Endothelial cell of umbilical vein (primary cell): ENCODE measurements at regions of chr11 and their contacts with region 1.

Region 1: GRCh38 chr11:77820563-77821348 is at the starts of genes AAMDC and RSF1:
- DNase-seq: peak; percentile 99
- H3K4me3 ChIP-seq: peak within 1 kb of the TSS; percentile 88 to 96 (median 91)
- H3K27ac ChIP-seq: peak within 1 kb of the TSS; percentile 53
- H3K4me1 ChIP-seq: peaks cover 13% of the 10 kb centered on the region
- H3K27me3 ChIP-seq: no peaks in the 10 kb centered on the region
- CTCF ChIP-seq: peak; percentile 61 to 93
- POLR2A ChIP-seq: peak; percentile 79
- total RNA-seq, gene AAMDC: 51.0 and 57.1 TPM in 2 replicates
- total RNA-seq, gene RSF1: 55.1 and 58.6 TPM in 2 replicates

Region 2: DNA sequence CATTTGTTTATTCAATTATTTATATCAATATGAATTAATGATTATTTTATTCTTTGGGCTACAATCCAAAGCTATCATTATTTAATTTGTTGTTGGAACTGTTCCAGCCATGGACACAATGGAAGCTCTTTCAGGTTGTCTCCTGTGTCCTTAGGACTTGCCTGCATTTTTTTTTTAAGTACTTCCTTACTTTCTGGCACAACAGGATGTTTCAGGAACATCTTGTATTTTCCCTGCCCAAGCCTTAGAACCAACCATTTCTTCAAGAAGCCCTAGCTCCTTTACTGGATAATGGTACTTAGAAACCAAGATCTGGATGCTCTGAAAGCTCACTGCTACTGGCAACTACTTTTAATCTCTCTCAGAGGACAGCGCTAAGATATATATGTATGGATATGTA is 125.3 kb before region 1 on chr11:
- CTCF ChIA-PET with region 1: no interaction called
- POLR2A ChIA-PET with region 1: no interaction called
- dilution Hi-C with region 1: no loop called
- intact Hi-C with region 1: no loop called
- DNase-seq: peak; percentile 22
- H3K4me3 ChIP-seq: no peak overlapping the region
- H3K27ac ChIP-seq: no peak overlapping the region
- H3K4me1 ChIP-seq: peaks cover 7% of the 10 kb centered on the region
- H3K27me3 ChIP-seq: no peaks in the 10 kb centered on the region
- CTCF ChIP-seq: no peak
- POLR2A ChIP-seq: no peak

Region 3: DNA sequence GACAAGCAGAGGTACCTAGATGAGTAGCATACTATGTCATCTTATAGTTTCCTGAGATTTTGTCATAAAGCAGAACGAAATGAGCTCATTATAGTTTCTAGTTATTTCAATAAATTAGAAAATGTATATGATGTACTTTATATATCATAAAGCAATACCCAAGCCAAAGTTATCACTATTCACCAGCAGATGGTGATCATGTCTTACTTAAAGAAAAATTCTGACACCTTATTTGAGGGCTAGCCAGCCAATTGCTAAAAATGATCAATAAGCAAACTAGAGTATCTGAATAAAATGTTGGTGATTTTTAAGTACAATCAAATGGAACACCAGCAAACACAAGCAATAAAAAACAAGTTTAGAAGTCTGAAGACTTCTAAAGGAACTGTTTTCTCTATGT is 44.3 kb before region 1 on chr11:
- CTCF ChIA-PET with region 1: interaction called, 4 read pairs
- POLR2A ChIA-PET with region 1: no interaction called
- dilution Hi-C with region 1: no loop called
- intact Hi-C with region 1: loop called (anchors 2 kb)
- DNase-seq: peak; percentile 49
- H3K4me3 ChIP-seq: no peak overlapping the region
- H3K27ac ChIP-seq: no peak overlapping the region
- H3K4me1 ChIP-seq: peaks cover 6% of the 10 kb centered on the region
- H3K27me3 ChIP-seq: no peaks in the 10 kb centered on the region
- CTCF ChIP-seq: peak in 1 of 2 donors; percentile 12
- POLR2A ChIP-seq: no peak

Region 4: DNA sequence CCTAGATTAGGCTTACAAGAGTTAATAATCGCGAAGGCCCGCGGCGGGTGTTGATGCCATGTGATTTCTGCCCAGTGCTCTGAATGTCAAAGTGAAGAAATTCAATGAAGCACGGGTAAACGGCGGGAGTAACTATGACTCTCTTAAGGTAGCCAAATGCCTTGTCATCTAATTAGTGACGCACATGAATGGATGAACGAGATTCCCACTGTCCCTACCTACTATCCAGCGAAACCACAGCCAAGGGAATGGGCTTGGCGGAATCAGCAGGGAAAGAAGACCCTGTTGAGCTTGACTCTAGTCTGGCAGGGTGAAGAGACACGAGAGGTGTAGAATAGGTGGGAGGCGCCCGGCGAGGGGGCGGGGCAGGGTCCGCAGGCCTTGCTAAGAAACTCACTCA is 65.6 kb after region 1 on chr11:
- CTCF ChIA-PET with region 1: no interaction called
- POLR2A ChIA-PET with region 1: no interaction called
- dilution Hi-C with region 1: no loop called
- intact Hi-C with region 1: loop called (anchors 5 kb)
- DNase-seq: peak; percentile 28
- H3K4me3 ChIP-seq: no peak overlapping the region
- H3K27ac ChIP-seq: no peak overlapping the region
- H3K4me1 ChIP-seq: peaks cover 16% of the 10 kb centered on the region
- H3K27me3 ChIP-seq: no peaks in the 10 kb centered on the region
- CTCF ChIP-seq: no peak
- POLR2A ChIP-seq: no peak

Region 5: DNA sequence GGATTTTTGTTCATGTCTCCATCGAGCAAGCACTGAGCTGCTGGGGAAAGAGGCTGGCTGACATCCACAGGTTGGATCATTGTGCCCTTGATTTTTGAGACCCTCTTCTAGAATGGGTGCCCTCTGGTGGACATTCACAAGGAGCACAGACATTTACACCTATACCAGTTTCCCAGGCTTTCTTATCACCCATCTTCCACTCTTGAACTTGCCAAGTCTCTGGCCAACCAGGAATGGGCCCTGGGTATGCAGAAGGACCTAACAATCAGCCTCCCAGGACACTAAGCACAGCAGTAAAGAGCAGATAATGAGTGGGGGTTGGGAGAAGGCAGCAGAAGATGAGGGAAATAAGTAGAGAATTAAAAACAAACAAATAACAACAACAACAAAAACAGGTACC is 179.4 kb after region 1 on chr11:
- CTCF ChIA-PET with region 1: interaction called, 16 read pairs
- POLR2A ChIA-PET with region 1: interaction called, 4 read pairs
- dilution Hi-C with region 1: no loop called
- intact Hi-C with region 1: loop called (anchors 1 kb)
- DNase-seq: peak; percentile 74
- H3K4me3 ChIP-seq: no peak overlapping the region
- H3K27ac ChIP-seq: no peak overlapping the region
- H3K4me1 ChIP-seq: peaks cover 1% of the 10 kb centered on the region
- H3K27me3 ChIP-seq: peaks cover 0 to 2% of the 10 kb centered on the region in 2 experiments
- CTCF ChIP-seq: peak; percentile 70 to 74
- POLR2A ChIP-seq: no peak

Region 6: DNA sequence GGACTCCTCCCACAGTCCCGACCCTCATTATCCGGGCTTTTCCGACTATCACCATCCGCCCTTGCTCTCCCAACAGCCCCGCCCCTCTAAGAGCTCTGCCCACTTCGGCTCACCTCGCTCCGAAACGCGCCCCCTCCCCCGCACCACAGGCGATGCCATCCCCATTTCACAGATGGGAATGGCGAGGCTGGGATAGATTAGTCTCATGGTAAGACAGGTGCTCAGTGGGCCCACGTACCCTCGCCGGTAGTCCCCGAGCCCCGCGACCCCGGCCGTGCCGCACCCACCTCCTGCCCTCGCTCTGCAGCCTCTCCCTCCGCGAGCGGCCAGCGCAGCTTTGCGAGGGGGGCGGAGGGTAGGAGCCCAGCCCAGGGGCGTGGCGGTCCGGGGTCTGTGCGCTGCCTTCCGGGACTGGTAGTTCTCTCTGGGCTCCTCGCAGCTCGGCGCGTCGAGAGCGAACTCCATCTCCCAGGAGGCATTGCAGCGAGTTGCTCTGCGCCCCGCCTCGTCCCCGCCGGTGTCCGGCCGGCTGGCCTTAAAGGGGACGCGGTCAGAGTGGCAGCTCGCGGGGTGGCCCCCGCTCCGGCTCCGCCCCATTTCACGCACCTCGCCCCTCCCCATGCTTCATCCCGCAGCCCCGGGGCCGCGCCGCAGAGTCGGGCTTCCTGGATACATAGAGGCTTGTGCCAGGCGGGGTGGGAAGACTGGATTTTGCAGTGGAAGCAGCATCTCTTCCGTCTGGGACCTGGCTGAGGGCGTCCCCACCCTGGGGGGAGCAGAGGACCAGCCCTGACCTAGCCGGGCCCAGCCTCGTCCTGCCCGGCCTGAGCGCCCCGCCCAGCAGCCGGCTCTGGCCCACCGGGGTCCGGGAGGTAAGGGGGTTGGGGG is 367.8 kb after region 1 on chr11 and contains the starts of genes KCTD21 and USP35:
- CTCF ChIA-PET with region 1: no interaction called
- POLR2A ChIA-PET with region 1: no interaction called
- dilution Hi-C with region 1: no loop called
- intact Hi-C with region 1: loop called (anchors 1 kb)
- DNase-seq: peak; percentile 98
- H3K4me3 ChIP-seq: peak within 1 kb of the TSS; percentile 68 to 81 (median 71)
- H3K27ac ChIP-seq: peak within 1 kb of the TSS; percentile 14
- H3K4me1 ChIP-seq: peaks cover 40% of the 10 kb centered on the region
- H3K27me3 ChIP-seq: no peaks in the 10 kb centered on the region
- CTCF ChIP-seq: no peak
- POLR2A ChIP-seq: peak; percentile 90
- total RNA-seq, gene KCTD21: 8.5 and 9.5 TPM in 2 replicates
- total RNA-seq, gene USP35: 10.3 and 12.4 TPM in 2 replicates